ENCODE measurements at regions of chr3 and their contacts with region 1.

Region 1: GRCh38 chr3:179653096-179653797 is 407 bp downstream of the USP13 start:
- DNase-seq: peak; percentile 57
- H3K4me3 Mint-ChIP-seq: peak overlapping the region; percentile 93
- H3K27ac Mint-ChIP-seq: peak overlapping the region; percentile 87
- H3K4me1 Mint-ChIP-seq: peaks cover 27% of the 10 kb centered on the region
- H3K27me3 Mint-ChIP-seq: peaks cover 9% of the 10 kb centered on the region

Region 2: DNA sequence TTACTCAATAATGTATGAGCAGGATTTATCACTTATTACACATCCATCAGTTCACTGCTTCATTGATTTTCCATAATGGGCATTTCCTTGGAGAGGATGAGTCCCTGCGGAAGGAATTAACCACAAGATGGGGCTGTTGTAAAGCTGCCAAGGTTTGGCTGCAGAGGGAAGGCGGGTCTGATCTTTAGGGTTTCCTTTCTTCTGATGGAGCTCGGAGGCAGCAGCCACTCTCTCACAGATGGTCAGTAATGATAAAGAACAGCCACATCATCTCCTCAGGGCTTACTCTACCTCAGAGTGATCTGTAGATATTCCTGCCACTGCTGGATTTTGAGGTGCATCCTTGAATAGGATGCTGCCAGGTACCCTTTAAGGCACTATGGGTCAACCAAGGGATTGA is 114.8 kb after region 1 on chr3:
- intact Hi-C with region 1: no loop called
- DNase-seq: no peak
- H3K4me3 Mint-ChIP-seq: no peak overlapping the region
- H3K27ac Mint-ChIP-seq: no peak overlapping the region
- H3K4me1 Mint-ChIP-seq: no peaks in the 10 kb centered on the region
- H3K27me3 Mint-ChIP-seq: no peaks in the 10 kb centered on the region

Region 3: DNA sequence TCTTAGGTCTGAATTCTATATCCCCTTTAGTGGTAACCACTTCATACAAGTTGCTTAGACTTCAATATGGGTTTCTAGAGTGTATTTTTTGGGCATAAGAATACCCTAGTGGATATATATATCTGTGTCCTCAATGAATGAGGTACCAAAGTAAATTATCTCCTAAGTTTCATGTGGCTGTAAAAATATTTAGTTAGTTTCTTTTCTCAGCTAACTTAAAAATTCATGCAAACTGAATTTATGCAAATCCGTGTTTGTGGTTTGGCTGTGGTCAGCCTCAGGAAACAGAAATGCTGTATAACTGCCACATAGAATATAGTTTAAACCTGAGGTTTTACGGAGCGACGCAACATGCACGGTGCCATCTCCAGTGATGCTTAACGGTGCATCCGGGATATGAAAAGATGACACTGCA is 303.2 kb after region 1 on chr3:
- intact Hi-C with region 1: loop called (anchors 10 kb)
- DNase-seq: peak; percentile 35
- H3K4me3 Mint-ChIP-seq: no peak overlapping the region
- H3K27ac Mint-ChIP-seq: no peak overlapping the region
- H3K4me1 Mint-ChIP-seq: peaks cover 35% of the 10 kb centered on the region
- H3K27me3 Mint-ChIP-seq: peaks cover 3% of the 10 kb centered on the region